Ascending aorta (tissue), 2 donors: ENCODE measurements at regions of chr7 and their contacts with region 1.

Region 1: GRCh38 chr7:116443101-116443523 is 56.4 kb upstream of the CAV2 start:
- DNase-seq: no peak
- H3K4me3 ChIP-seq: no peak overlapping the region
- H3K27ac ChIP-seq: peak overlapping the region; percentile 76 to 82
- H3K4me1 ChIP-seq: peaks cover 11 to 42% of the 10 kb centered on the region in 2 donors
- H3K27me3 ChIP-seq: no peaks in the 10 kb centered on the region
- CTCF ChIP-seq: no peak

Region 2: DNA sequence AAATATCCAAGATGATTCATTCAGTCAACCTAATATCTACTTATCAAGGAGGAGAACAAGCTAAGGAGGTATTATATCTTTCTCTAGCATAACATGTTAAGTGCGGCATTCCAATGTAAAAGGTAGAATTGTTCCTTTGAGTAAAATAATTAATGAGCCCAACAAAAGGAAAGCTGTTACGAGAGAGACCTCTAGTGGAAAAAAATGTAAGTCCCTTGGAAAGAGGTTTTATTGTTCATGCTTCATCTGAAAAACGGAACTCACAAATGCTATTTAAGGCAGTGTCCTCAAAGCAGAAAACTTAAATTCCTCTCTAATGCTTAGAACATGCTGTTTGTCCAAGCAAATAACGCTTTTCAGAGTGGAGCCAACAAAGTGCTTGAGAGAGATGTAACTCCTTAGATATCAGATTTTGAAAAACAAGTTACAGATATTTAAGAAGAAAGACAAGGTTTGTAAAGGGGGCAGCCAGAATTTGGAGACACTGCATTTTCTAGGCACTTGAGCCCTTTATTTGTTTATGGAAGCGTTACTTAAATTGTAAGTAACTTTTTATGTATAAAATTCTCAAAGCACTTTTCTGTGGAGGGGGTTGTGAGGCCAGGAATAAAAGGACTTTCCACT is 532.5 kb before region 1 on chr7:
- intact Hi-C with region 1: no loop called
- DNase-seq: no peak
- H3K4me3 ChIP-seq: no peak overlapping the region
- H3K27ac ChIP-seq: no peak overlapping the region
- H3K4me1 ChIP-seq: no peaks in the 10 kb centered on the region
- H3K27me3 ChIP-seq: no peaks in the 10 kb centered on the region
- CTCF ChIP-seq: peak in 1 of 3 experiments; percentile 54

Region 3: DNA sequence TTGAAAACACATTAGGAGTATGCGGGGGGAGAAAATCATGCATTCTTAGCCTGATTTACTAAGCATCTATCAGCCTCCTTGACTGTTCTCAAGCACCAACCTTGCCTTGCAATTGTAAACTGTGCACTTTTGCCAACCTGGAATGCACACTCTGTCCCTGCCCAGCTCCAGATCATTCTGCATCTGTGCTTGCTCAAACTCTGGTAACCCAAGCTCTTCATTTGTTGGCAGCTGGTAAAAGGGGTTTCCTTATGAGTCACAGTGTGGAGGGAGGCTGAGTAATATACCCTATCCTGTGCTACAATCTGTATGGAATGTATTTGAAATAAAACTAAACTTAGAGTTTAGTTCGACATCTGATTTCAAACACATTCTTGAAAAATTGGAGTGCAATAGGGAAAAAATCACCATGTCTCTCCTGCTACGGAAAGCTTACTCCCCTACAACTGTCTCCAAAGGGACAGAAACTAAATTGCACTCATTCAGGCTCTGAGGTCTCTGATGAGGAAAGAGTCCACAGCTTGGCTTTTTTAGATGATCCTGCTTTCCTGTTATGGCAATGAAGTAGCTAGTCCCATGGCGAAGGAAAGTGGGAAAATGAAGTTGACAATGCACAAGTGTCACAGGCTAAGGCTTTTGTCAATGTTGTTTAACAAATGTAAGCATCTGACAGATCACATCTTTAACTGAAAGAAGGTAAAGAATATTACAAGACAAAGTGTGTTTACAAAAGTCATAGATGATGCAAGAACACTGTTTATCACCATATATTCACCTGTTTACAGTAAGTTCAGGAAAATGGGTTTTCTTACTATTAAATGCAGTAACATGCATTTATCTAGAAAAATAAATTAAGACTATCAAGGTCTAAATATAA is 170.9 kb before region 1 on chr7:
- intact Hi-C with region 1: loop called (anchors 5 kb)
- DNase-seq: peak; percentile 20 to 82
- H3K4me3 ChIP-seq: peak overlapping the region in 1 of 2 donors; percentile 11
- H3K27ac ChIP-seq: peak overlapping the region; percentile 69
- H3K4me1 ChIP-seq: peaks cover 12 to 34% of the 10 kb centered on the region in 2 donors
- H3K27me3 ChIP-seq: no peaks in the 10 kb centered on the region
- CTCF ChIP-seq: no peak

Region 4: GRCh38 chr7:116499168-116500077 is 56.3 kb after region 1 on chr7 and contains the start of gene CAV2:
- intact Hi-C with region 1: loop called (anchors 2 kb)
- DNase-seq: peak; percentile 13 to 86
- H3K4me3 ChIP-seq: peak within 1 kb of the TSS; percentile 77 to 87
- H3K27ac ChIP-seq: peak within 1 kb of the TSS; percentile 97 to 100
- H3K4me1 ChIP-seq: peaks cover 0 to 13% of the 10 kb centered on the region in 2 donors
- H3K27me3 ChIP-seq: no peaks in the 10 kb centered on the region
- CTCF ChIP-seq: no peak
- total RNA-seq, gene CAV2: 92.6 TPM

Region 5: GRCh38 chr7:116582806-116583444 is 139.8 kb after region 1 on chr7:
- intact Hi-C with region 1: loop called (anchors 5 kb)
- DNase-seq: peak in 1 of 2 donors; percentile 86
- H3K4me3 ChIP-seq: peak overlapping the region in 1 of 2 donors; percentile 23
- H3K27ac ChIP-seq: peak overlapping the region; percentile 69 to 80
- H3K4me1 ChIP-seq: peaks cover 9 to 22% of the 10 kb centered on the region in 2 donors
- H3K27me3 ChIP-seq: no peaks in the 10 kb centered on the region
- CTCF ChIP-seq: no peak